GM12878 (cell line): ENCODE measurements at regions of chr14 and their contacts with region 1.

Region 1: DNA sequence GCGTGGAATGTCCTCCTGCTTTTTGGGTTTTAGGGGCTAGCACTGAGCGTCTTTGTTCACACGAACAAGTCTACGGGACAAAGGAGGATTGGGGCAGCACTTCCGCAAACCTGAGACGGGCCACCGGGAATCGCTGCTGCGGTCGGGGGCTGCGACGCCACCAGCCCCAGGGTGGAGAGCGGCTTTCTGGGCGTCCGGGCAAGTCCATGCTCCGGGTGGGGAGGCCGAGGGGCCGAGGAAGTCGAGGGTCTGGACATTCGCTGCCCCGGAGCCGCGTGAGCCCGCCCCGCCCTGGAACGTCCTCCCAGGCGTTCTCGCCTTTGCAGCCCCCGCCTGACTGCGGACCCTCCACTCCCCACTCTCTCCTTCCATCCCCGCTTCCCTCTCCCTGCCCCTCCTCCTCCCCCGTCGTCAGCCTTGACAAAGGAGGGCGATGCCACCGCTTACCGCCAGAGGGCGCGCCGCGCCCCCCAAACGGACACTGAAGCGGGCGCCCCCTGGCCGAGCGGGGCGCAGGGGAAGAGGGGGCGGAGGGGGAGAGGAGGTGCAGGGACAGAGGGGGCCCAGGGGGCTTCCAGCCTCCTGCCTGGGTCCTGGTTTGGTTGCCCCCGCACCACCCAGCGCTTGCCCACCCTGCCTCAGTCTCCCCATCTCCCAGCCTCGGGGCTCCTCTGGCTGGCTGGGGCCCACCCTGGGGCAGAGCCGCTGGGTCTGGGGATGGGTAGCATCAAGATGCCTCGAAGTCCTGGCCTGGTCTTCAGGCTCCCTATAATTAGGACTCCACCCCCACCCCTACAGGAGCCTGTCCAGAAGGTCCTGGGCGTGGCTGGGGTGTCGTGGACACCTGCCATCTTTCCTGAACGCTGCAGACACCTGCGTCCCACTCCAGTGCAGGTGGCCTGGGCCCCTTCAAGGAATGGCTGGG is 39.1 kb upstream of the INF2 start:
- DNase-seq: no peak
- ATAC-seq: peak; percentile 98
- H3K4me3 ChIP-seq: 0 out of 2 replicates have a peak overlapping the region, but pooled peaks have one; percentile 29
- H3K27ac ChIP-seq: no peak overlapping the region
- H3K4me1 ChIP-seq: no peaks in the 10 kb centered on the region
- H3K27me3 ChIP-seq: no peaks in the 10 kb centered on the region
- CTCF ChIP-seq: peak; percentile 92 to 100 (median 99)
- EP300 ChIP-seq: no peak
- POLR2A ChIP-seq: no peak
- RAD21 ChIP-seq: peak; percentile 98

Region 2: DNA sequence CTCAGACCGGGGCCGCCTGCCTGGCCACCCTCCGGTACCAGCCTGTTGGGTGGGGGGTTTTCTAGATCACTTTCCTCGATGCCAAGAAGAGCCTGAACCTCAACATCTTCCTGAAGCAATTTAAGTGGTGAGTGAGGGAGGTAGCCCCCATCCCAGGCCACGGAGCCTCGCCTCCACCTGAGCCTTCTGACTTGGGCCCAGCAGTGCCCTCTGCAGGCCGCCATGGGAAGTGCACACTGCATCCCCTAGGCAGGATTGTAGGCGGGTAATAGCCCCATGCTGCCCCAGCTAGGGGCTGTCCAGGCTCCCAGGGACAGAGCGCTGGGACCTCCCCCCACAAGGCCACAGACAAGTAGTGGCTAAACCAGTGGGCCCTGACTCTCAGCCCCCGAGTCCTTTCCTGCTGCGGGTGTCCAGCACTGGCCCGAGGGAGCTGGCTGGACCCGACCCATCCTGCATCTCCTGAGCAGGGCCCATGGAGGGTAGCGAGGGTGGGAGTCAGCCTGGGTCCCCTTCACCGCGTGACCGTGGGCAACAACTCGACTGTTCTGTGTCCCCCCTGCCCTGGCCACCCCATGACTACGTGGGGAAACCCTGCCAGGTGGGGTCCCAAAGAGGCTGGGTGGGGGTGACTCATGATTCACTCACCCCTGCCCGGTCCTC is 58.4 kb after region 1 on chr14:
- CTCF ChIA-PET with region 1: interaction called, 15 read pairs
- POLR2A ChIA-PET with region 1: no interaction called
- RAD21 ChIA-PET with region 1: interaction called, 7 read pairs
- SMC1A ChIA-PET with region 1: interaction called, 4 read pairs
- in situ Hi-C with region 1: no loop called
- intact Hi-C with region 1: loop called (anchors 1 kb)
- DNase-seq: no peak
- ATAC-seq: peak; percentile 94
- H3K4me3 ChIP-seq: no peak overlapping the region
- H3K27ac ChIP-seq: no peak overlapping the region
- H3K4me1 ChIP-seq: no peaks in the 10 kb centered on the region
- H3K27me3 ChIP-seq: no peaks in the 10 kb centered on the region
- CTCF ChIP-seq: peak; percentile 89 to 97 (median 96)
- EP300 ChIP-seq: no peak
- POLR2A ChIP-seq: no peak
- RAD21 ChIP-seq: peak; percentile 87